ENCODE measurements at regions of chr15 and their contacts with region 1.

Region 1: DNA sequence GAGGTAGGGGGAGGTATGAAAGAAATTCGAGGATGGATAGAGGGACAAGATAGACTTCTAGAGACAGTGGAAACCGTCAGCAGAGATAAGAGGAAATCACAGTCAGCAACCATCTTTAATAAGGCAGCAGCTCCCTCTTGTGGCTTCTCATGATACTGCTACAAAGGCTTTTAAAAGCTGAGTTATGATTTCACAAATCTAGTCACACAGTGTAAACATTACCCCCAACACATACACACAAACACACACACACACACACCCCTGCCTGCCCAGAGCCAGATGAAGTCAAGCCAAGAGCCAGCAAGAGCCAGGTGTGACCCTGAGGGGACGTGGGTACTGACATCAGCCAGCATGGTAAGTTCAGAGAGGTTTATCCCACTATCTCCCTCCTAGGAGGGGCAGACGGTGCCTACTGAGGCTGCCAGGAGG is 18.9 kb upstream of the TGM5 start:
- DNase-seq: peak in 1 of 2 donors; percentile 81
- ATAC-seq: peak; percentile 78 to 86 (median 85)
- H3K4me3 ChIP-seq: no peak overlapping the region
- H3K4me3 Mint-ChIP-seq: no peak overlapping the region
- H3K27ac ChIP-seq: no peak overlapping the region
- H3K27ac Mint-ChIP-seq: no peak overlapping the region
- H3K4me1 ChIP-seq: no peaks in the 10 kb centered on the region
- H3K4me1 Mint-ChIP-seq: peaks cover 6 to 7% of the 10 kb centered on the region in 2 donors
- H3K27me3 ChIP-seq: no peaks in the 10 kb centered on the region
- H3K27me3 Mint-ChIP-seq: peaks cover 7 to 20% of the 10 kb centered on the region in 2 donors
- CTCF ChIP-seq: peak; percentile 74

Region 2: DNA sequence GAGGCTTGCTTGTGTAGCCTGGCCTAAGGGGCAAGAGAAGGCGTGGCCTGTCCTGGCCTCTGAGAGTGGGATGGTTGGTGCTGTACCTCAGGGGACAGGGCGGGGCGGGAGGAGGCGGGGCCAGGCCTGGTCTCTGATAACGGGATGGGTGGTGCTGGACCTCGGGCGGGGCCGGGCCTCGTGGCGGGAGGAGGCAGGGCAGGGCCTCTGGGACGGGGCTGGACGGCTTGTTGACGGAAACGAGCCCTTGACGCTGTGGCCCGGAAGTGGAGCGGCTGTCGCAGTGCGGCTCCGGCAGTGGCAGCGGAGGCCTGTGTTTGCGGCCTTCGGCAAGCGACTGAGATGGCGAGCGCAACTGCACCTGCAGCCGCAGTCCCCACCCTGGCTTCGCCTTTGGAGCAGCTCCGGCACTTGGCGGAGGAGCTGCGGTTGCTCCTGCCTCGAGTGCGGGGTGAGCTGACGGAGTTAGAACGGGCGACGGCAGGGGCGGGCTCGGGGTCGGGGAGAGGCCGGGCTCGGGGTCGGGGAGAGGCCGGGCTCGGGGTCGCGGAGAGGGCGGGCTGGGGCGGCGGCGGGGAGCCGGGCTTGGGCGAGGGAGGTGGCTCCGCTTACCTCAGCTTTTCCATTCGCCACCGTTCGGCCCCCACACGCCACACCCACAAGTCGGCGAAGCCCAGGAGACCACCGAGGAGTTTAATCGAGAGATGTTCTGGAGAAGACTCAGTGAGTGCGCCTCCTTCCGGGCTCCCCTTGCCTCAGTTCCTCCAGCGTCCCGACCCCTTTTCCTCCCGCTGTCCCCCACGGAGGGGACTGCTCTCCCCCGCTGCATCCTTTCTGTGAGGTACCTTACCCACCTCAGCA is 100.2 kb before region 1 on chr15 and contains the start of gene CCNDBP1:
- intact Hi-C with region 1: loop called (anchors 1 kb)
- DNase-seq: peak; percentile 82 to 90
- ATAC-seq: peak; percentile 83 to 96 (median 91)
- H3K4me3 ChIP-seq: peak within 1 kb of the TSS; percentile 73
- H3K4me3 Mint-ChIP-seq: peak within 1 kb of the TSS; percentile 93
- H3K27ac ChIP-seq: peak within 1 kb of the TSS; percentile 93
- H3K27ac Mint-ChIP-seq: peak within 1 kb of the TSS; percentile 91 to 96
- H3K4me1 ChIP-seq: peaks cover 16% of the 10 kb centered on the region
- H3K4me1 Mint-ChIP-seq: peaks cover 35 to 49% of the 10 kb centered on the region in 2 donors
- H3K27me3 ChIP-seq: no peaks in the 10 kb centered on the region
- H3K27me3 Mint-ChIP-seq: no peaks in the 10 kb centered on the region
- CTCF ChIP-seq: peak; percentile 40
- total RNA-seq, gene CCNDBP1: 120 to 150 (median 129) TPM

Region 3: DNA sequence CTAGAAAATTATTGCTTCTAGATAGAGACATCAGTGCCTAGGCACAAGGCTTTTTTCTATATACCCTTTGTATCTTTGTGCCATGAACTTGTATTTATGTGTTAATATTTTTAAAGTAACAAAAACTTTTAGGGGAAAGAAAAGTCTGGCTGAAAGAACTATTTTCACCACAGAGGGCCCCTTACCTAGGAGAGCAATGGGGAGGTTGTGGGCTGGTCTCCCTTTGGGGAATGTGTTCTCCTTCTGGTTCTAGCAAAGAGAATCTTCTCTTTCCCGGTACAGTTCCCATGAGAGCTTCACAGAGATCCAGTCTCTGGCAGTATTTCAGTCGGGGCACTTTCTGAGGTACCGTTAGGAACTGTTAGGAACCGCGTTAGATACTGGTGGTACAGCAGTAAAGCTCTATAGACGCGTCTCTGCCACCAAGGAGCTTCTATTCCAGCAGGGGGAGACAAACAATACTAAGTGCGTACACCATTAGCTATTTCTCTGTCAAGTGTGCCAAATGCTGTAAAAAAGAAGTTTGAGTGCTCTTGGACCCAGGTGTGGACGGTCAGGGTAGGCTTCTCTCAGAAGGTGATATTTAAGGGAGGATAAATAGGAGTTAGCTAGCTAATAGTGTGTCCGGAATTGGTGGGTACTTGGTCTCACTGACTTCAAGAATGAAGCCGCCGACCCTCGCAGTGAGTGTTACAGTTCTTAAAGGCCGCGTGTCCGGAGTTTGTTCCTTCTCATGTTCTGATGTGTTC is 60.2 kb before region 1 on chr15:
- intact Hi-C with region 1: loop called (anchors 1 kb)
- DNase-seq: peak in 1 of 2 donors; percentile 79
- ATAC-seq: peak; percentile 77 to 87 (median 84)
- H3K4me3 ChIP-seq: no peak overlapping the region
- H3K4me3 Mint-ChIP-seq: peak overlapping the region; percentile 70
- H3K27ac ChIP-seq: no peak overlapping the region
- H3K27ac Mint-ChIP-seq: peak overlapping the region in 1 of 2 donors; percentile 78
- H3K4me1 ChIP-seq: peaks cover 7% of the 10 kb centered on the region
- H3K4me1 Mint-ChIP-seq: peaks cover 16 to 18% of the 10 kb centered on the region in 2 donors
- H3K27me3 ChIP-seq: no peaks in the 10 kb centered on the region
- H3K27me3 Mint-ChIP-seq: peaks cover 7 to 11% of the 10 kb centered on the region in 2 donors
- CTCF ChIP-seq: peak; percentile 67

Region 4: GRCh38 chr15:43469867-43470266 is 184.2 kb after region 1 on chr15:
- intact Hi-C with region 1: no loop called
- DNase-seq: no peak
- ATAC-seq: no peak
- H3K4me3 ChIP-seq: no peak overlapping the region
- H3K4me3 Mint-ChIP-seq: no peak overlapping the region
- H3K27ac ChIP-seq: no peak overlapping the region
- H3K27ac Mint-ChIP-seq: no peak overlapping the region
- H3K4me1 ChIP-seq: no peaks in the 10 kb centered on the region
- H3K4me1 Mint-ChIP-seq: no peaks in the 10 kb centered on the region
- H3K27me3 ChIP-seq: no peaks in the 10 kb centered on the region
- H3K27me3 Mint-ChIP-seq: no peaks in the 10 kb centered on the region
- CTCF ChIP-seq: no peak

Measured in natural killer cell (primary cell).